ENCODE measurements at regions of chr6 and their contacts with region 1.

Region 1: GRCh38 chr6:17584241-17584803 is 15.8 kb upstream of the FAM8A1 start:
- DNase-seq: no peak
- ATAC-seq: peak; percentile 84 to 85

Region 2: GRCh38 chr6:17156112-17156921 is 428.0 kb before region 1 on chr6:
- intact Hi-C with region 1: loop called (anchors 1 to 5 kb)
- DNase-seq: peak; percentile 54
- ATAC-seq: peak in 1 of 2 donors; percentile 48

Region 3: GRCh38 chr6:17469006-17469832 is 115.1 kb before region 1 on chr6:
- intact Hi-C with region 1: loop called in 1 of 2 experiments (anchors 5 kb)
- DNase-seq: no peak
- ATAC-seq: no peak

Region 4: DNA sequence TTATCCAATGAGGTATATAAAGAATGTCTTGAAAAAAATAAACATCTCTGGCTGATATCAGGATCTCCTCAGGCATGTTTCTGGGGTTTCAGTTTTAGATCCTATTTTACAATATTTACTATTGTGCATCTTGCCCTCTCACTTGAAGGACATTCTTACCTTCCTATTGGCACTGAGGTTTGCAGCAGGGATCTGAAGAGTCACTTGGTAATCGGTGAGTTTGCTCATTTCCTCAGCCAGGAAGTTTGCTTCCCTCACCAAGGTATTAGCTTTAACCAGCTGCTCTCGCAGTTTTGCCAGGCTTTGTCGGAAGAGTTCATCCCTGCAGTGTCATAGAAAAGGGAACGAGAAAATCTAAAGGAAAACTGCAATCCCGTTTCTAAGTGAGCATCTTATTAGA is 224.3 kb after region 1 on chr6:
- intact Hi-C with region 1: loop called in 1 of 2 experiments (anchors 10 kb)
- DNase-seq: no peak
- ATAC-seq: no peak